K562 (cell line): ENCODE measurements at regions of chr5 and their contacts with region 1.

Region 1: GRCh38 chr5:58060996-58061395 is 398.9 kb downstream of the PLK2 start:
- DNase-seq: no peak
- ATAC-seq: no peak
- H3K4me3 ChIP-seq: no peak overlapping the region
- H3K27ac ChIP-seq: no peak overlapping the region
- H3K4me1 ChIP-seq: no peaks in the 10 kb centered on the region
- H3K27me3 ChIP-seq: no peaks in the 10 kb centered on the region
- CTCF ChIP-seq: no peak
- EP300 ChIP-seq: no peak
- POLR2A ChIP-seq: no peak
- RAD21 ChIP-seq: no peak

Region 2: DNA sequence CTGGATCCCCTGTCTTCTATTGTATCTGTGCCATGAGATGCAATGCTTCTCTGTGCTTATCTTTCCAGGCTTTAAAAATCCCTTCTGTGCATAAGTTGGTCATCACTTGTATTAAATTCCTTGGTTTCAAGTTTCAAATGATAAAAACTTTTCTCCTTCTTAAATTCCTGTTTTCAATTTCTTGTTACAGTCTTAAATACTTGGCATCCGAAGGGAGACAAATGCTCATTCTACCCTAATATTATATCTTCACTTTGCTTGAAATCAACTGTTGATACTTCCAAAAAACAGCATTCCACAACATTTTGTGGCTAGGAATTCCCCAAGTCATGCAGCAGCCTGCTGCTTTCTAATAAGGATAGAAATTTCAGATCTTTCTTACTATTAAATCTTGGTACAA is 165.2 kb before region 1 on chr5:
- CTCF ChIA-PET with region 1: no interaction called
- POLR2A ChIA-PET with region 1: no interaction called
- in situ Hi-C with region 1: no loop called
- intact Hi-C with region 1: loop called (anchors 10 kb)
- DNase-seq: no peak
- ATAC-seq: no peak
- H3K4me3 ChIP-seq: no peak overlapping the region
- H3K27ac ChIP-seq: no peak overlapping the region
- H3K4me1 ChIP-seq: no peaks in the 10 kb centered on the region
- H3K27me3 ChIP-seq: no peaks in the 10 kb centered on the region
- CTCF ChIP-seq: no peak
- EP300 ChIP-seq: no peak
- POLR2A ChIP-seq: no peak
- RAD21 ChIP-seq: no peak